Heart right ventricle (tissue), 16 donors: ENCODE measurements at regions of chr21 and their contacts with region 1.

Region 1: DNA sequence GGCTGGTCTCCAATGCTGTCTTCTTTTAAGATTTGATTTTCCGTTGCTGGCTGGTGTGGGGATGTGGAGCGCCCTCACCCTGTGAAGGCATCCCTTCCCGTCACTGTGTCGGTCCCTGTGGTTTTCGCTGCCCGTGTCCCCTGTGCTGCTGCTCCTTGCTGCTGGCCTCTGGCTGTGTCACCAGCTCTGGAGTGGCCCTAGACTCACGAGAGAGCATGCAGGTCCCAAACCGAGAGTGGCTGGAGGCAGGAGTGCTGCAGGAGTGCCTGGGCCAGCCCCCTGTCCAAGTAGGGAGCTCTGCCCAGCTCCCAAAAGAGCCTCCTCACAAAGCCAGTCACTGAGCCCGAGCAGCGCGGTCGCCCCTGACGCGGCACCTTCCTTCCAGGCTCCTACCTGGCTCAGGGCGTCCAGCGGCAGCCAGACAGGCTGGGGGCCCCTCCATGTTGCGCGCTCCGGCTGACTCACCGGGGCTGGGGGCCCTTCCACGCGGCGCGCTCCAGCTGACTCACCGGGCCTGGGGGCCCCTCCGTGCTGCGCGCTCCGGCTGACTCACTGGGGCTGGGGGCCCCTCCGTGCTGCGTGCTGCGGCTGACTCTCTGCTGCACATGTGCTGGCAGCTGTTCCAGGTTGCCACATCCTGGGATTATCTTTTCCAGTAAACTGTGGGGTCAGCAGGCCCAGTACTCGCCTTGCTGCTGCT is 106.7 kb upstream of the COL6A1 start:
- DNase-seq: no peak
- ATAC-seq: peak in 5 of 8 donors; percentile 25 to 84 (median 64)
- H3K4me3 ChIP-seq: no peak overlapping the region
- H3K27ac ChIP-seq: no peak overlapping the region
- H3K4me1 ChIP-seq: peaks cover 0 to 16% (median 0%) of the 10 kb centered on the region in 9 donors
- H3K27me3 ChIP-seq: peaks cover 0 to 69% (median 5%) of the 10 kb centered on the region in 7 donors
- CTCF ChIP-seq: no peak

Region 2: GRCh38 chr21:45228171-45228641 is 646.7 kb before region 1 on chr21:
- intact Hi-C with region 1: no loop called
- DNase-seq: no peak
- ATAC-seq: peak in 2 of 8 donors; percentile 33 to 65
- H3K4me3 ChIP-seq: no peak overlapping the region
- H3K27ac ChIP-seq: no peak overlapping the region
- H3K4me1 ChIP-seq: peaks cover 0 to 15% (median 0%) of the 10 kb centered on the region in 9 donors
- H3K27me3 ChIP-seq: peaks cover 0 to 21% (median 9%) of the 10 kb centered on the region in 7 donors
- CTCF ChIP-seq: no peak

Region 3: DNA sequence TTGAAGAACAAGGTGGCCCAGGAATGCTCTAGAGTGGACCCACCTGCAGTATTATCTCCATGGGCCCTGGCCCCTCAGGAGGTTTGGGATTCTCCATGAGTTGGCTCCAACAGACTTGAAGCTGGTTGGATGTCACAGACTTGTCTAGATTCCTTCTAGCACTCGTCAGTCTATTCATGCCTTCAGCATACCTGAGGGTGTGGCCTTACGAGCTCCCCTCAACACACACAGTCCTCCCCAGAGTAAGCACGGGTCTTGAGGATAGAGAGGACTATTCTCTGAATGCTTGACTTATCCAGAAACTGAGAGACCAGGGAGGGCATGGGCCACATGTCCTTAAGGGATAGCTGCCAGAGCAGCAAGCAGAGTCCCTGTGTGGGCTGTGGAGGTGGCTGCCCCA is 60.8 kb after region 1 on chr21:
- intact Hi-C with region 1: loop called in 1 of 10 experiments (anchors 10 kb)
- DNase-seq: no peak
- ATAC-seq: no peak
- H3K4me3 ChIP-seq: no peak overlapping the region
- H3K27ac ChIP-seq: no peak overlapping the region
- H3K4me1 ChIP-seq: no peaks in the 10 kb centered on the region
- H3K27me3 ChIP-seq: no peaks in the 10 kb centered on the region
- CTCF ChIP-seq: no peak

Region 4: GRCh38 chr21:46079352-46080170 is 204.7 kb after region 1 on chr21:
- intact Hi-C with region 1: no loop called
- DNase-seq: peak in 1 of 2 donors; percentile 36
- ATAC-seq: peak; percentile 17 to 65 (median 58)
- H3K4me3 ChIP-seq: no peak overlapping the region
- H3K27ac ChIP-seq: peak overlapping the region in 3 of 10 donors; percentile 22 to 76 (median 28)
- H3K4me1 ChIP-seq: peaks cover 8 to 28% (median 24%) of the 10 kb centered on the region in 9 donors
- H3K27me3 ChIP-seq: peaks cover 0 to 8% (median 0%) of the 10 kb centered on the region in 7 donors
- CTCF ChIP-seq: no peak